ENCODE measurements at regions of chr1 and their contacts with region 1.

Region 1: DNA sequence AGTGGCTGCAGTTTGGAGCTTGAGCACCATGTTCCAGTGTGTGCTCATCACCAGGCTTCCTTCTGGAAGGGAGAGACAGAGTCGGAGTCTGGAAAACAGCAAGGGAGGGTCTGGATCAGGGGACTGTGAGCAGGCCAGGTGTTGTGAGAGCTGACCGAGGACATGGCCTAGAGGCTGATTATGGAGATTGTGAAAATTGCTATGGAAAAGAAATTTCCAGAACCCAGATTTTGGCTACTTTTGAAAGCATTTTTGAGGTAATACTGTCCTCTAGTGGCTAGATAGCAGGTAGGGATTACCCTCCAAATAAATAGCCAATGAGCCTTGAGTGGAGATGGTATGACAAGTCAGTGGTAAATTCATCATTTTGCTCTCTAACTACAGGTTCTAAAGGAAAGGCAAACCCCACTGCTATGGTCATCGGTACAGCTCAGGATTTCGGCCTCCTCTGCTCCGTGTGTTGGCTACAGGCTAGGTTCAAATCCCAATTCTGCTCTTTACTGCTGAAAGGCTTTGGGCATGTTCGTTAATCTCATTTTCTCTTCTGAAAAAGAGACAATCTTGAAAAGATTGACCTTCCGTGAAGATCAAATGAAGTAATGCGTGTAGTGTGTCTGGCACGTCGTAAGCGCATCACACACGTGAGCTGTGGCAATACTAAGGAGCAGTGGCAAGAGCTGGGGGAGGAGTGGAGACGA is 1.0 kb upstream of the HAO2 start:
- DNase-seq: peak in 1 of 2 experiments; percentile 21
- H3K4me3 ChIP-seq: no peak overlapping the region
- H3K4me3 Mint-ChIP-seq: no peak overlapping the region
- H3K27ac Mint-ChIP-seq: no peak overlapping the region
- H3K4me1 ChIP-seq: no peaks in the 10 kb centered on the region
- H3K4me1 Mint-ChIP-seq: no peaks in the 10 kb centered on the region
- H3K27me3 ChIP-seq: no peaks in the 10 kb centered on the region
- H3K27me3 Mint-ChIP-seq: no peaks in the 10 kb centered on the region
- CTCF ChIP-seq: peak; percentile 65 to 87

Region 2: GRCh38 chr1:119286587-119287181 is 80.9 kb before region 1 on chr1:
- CTCF ChIA-PET with region 1: interaction called, 3 read pairs
- POLR2A ChIA-PET with region 1: no interaction called
- intact Hi-C with region 1: loop called (anchors 1 kb)
- DNase-seq: peak; percentile 54 to 67
- H3K4me3 ChIP-seq: no peak overlapping the region
- H3K4me3 Mint-ChIP-seq: no peak overlapping the region
- H3K27ac Mint-ChIP-seq: no peak overlapping the region
- H3K4me1 ChIP-seq: no peaks in the 10 kb centered on the region
- H3K4me1 Mint-ChIP-seq: peaks cover 7% of the 10 kb centered on the region
- H3K27me3 ChIP-seq: no peaks in the 10 kb centered on the region
- H3K27me3 Mint-ChIP-seq: no peaks in the 10 kb centered on the region
- CTCF ChIP-seq: peak; percentile 58 to 60

Region 3: DNA sequence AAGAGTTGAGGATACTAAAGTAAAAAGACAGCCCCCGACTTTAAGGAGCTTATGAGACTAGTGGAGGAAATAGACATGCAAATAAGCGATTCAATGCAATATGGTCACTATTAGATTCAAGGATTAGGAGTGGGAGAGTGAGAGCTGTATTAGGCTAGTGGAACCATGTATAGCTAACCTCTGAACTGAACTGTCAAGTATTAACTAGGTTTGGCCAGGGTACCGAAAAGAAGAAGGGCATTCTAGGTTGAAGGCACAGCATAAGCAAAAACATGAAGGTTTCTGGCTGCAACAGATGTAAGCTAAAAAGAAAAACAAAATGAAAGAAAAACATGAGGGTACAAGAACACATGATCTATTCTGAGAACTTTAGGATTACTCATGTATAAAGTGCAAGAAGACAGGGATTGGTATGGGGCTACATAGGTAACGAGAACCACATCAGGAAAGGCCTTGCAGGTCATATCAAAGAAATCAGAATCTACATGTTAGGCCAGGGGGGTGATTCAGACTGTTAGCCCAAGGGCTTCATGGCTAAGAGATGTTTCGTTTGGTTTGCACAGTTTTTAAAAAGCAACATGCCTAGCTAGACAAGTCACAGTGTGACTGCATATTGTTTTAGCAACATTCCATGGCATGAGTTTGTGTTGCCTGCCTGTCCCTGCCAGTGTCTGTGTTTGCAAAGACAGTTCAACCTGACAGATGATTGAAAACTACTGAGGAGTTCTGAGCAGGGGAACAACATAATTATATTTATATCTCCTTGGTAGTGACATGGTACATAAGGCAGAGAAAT is 53.4 kb before region 1 on chr1:
- CTCF ChIA-PET with region 1: no interaction called
- POLR2A ChIA-PET with region 1: no interaction called
- intact Hi-C with region 1: loop called (anchors 2 kb)
- DNase-seq: no peak
- H3K4me3 ChIP-seq: no peak overlapping the region
- H3K4me3 Mint-ChIP-seq: no peak overlapping the region
- H3K27ac Mint-ChIP-seq: no peak overlapping the region
- H3K4me1 ChIP-seq: no peaks in the 10 kb centered on the region
- H3K4me1 Mint-ChIP-seq: no peaks in the 10 kb centered on the region
- H3K27me3 ChIP-seq: no peaks in the 10 kb centered on the region
- H3K27me3 Mint-ChIP-seq: no peaks in the 10 kb centered on the region
- CTCF ChIP-seq: no peak